WTC11 (cell line): ENCODE measurements at regions of chr1 and their contacts with region 1.

Region 1: GRCh38 chr1:240888039-240888786 is 276.3 kb upstream of the GREM2 start:
- DNase-seq: peak; percentile 82
- ATAC-seq: peak; percentile 95
- H3K4me3 Mint-ChIP-seq: no peak overlapping the region
- H3K27ac Mint-ChIP-seq: peak overlapping the region; percentile 20
- H3K4me1 Mint-ChIP-seq: peaks cover 9% of the 10 kb centered on the region
- H3K27me3 Mint-ChIP-seq: no peaks in the 10 kb centered on the region
- CTCF ChIP-seq: peak; percentile 99

Region 2: DNA sequence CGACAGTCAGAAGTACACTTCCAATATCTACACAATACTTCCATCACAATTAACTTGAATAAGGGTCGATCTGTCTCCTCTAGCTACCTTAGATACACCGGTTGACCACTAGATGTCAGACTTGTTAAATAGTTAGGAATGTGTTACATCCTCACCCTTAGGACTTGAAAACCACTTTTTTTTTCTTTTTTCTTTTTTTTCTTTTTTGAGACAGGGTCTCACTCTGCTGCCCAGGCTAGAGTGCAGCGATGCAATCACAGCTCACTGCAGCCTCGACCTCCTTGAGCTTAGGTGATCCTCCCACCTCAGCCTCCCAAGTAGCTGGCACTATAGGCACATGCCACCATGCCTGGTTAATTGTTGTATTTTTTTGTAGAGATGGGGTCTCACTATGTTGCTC is 155.8 kb before region 1 on chr1:
- CTCF ChIA-PET with region 1: interaction called, 12 read pairs
- POLR2A ChIA-PET with region 1: interaction called, 3 read pairs
- DNase-seq: no peak
- ATAC-seq: peak; percentile 94
- H3K4me3 Mint-ChIP-seq: no peak overlapping the region
- H3K27ac Mint-ChIP-seq: no peak overlapping the region
- H3K4me1 Mint-ChIP-seq: peaks cover 19% of the 10 kb centered on the region
- H3K27me3 Mint-ChIP-seq: no peaks in the 10 kb centered on the region
- CTCF ChIP-seq: peak; percentile 33; the same call in 1 of the 2 replicates

Region 3: DNA sequence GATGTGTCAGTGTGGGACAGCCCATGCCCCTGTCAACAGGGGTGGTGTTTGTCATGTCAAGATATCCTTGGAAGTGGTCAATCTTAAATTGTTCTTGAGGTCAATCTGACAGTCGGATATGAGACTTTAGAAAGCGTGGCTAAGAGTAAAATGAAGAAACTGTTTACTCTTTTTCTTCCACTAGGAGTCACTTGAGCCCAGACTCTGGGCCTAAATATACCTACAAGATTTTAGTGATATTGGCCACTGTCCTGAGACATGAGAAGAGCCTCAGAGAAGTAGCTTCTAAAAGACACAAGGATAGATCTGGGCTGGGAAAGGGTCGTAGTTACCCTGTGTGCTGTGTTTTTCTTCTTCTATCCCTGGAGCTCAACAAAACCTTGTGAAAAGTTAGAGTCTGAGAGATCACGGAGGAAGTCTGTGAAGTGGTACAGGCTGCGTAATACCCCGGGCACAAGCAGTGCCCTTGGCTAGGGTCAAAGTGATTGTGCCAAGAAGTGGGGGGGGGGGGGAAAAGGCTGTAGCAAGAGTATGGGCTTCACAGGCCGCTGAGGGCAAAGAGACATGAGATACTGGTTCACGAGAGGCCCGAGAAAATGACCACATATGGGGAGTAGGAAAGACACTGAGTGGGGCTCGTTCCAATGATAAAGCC is 79.0 kb after region 1 on chr1:
- CTCF ChIA-PET with region 1: interaction called, 11 read pairs
- POLR2A ChIA-PET with region 1: no interaction called
- DNase-seq: no peak
- ATAC-seq: peak; percentile 81
- H3K4me3 Mint-ChIP-seq: no peak overlapping the region
- H3K27ac Mint-ChIP-seq: no peak overlapping the region
- H3K4me1 Mint-ChIP-seq: peaks cover 27% of the 10 kb centered on the region
- H3K27me3 Mint-ChIP-seq: no peaks in the 10 kb centered on the region
- CTCF ChIP-seq: 0 out of 2 replicates have a peak, but pooled peaks have one; percentile 16

Region 4: GRCh38 chr1:241485554-241485992 is 597.4 kb after region 1 on chr1:
- CTCF ChIA-PET with region 1: interaction called, 25 read pairs
- POLR2A ChIA-PET with region 1: no interaction called
- DNase-seq: no peak
- ATAC-seq: peak; percentile 60
- H3K4me3 Mint-ChIP-seq: no peak overlapping the region
- H3K27ac Mint-ChIP-seq: no peak overlapping the region
- H3K4me1 Mint-ChIP-seq: no peaks in the 10 kb centered on the region; the same call in 1 of the 2 replicates
- H3K27me3 Mint-ChIP-seq: no peaks in the 10 kb centered on the region; the same call in 1 of the 2 replicates
- CTCF ChIP-seq: peak; percentile 47